PC-3 (cell line): ENCODE measurements at regions of chr17 and their contacts with region 1.

Region 1: DNA sequence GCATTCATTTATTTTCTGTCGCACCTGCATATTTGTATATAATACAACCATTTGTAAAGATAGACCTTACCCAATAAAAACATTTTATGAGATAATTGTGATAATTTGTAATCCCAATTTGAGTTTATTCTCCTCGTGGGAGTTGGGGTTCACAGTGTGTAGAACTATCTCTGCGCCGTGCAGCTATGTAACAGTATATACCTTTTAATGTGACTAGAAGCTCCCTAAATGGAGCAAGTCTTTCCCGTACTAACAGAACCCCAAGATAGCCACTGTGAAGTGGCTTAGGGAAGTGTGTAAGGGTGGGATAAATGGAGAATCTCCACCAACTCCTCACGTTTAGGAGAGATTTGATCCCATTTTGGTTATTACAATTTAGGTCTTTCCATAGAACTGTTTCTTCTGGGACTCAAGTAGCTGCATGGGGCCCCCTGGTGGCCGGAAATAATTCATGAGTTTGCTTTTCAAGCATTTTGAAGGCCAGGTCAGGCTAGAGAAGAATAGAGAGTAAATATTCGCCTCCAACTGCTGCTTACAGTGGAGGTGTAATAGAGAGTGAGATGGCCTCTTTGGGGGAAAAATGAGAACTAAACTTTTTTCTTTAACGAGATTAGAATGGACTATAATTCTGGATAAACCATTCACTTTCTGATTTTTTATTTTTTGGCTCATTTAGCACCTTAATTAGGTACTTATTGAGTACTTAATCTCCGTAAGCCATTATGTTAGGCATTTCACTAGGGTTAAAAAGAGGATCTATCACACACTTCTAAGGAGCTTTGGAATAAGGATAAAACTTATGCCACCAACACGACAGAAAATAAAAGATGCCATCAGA is 4.5 kb downstream of the TMEM100 start:
- DNase-seq: peak; percentile 90
- ATAC-seq: peak; percentile 81
- H3K4me3 ChIP-seq: no peak overlapping the region
- H3K27ac ChIP-seq: no peak overlapping the region
- H3K4me1 ChIP-seq: no peaks in the 10 kb centered on the region
- H3K27me3 ChIP-seq: peaks cover 51% of the 10 kb centered on the region
- CTCF ChIP-seq: peak; percentile 93

Region 2: GRCh38 chr17:55601874-55602364 is 116.2 kb before region 1 on chr17:
- CTCF ChIA-PET with region 1: no interaction called
- POLR2A ChIA-PET with region 1: no interaction called
- intact Hi-C with region 1: loop called (anchors 1 kb)
- DNase-seq: peak; percentile 77
- ATAC-seq: peak; percentile 76
- H3K4me3 ChIP-seq: no peak overlapping the region
- H3K27ac ChIP-seq: no peak overlapping the region
- H3K4me1 ChIP-seq: peaks cover 5% of the 10 kb centered on the region; the same call in 1 of the 2 replicates
- H3K27me3 ChIP-seq: peaks cover 19% of the 10 kb centered on the region
- CTCF ChIP-seq: peak; percentile 93

Region 3: DNA sequence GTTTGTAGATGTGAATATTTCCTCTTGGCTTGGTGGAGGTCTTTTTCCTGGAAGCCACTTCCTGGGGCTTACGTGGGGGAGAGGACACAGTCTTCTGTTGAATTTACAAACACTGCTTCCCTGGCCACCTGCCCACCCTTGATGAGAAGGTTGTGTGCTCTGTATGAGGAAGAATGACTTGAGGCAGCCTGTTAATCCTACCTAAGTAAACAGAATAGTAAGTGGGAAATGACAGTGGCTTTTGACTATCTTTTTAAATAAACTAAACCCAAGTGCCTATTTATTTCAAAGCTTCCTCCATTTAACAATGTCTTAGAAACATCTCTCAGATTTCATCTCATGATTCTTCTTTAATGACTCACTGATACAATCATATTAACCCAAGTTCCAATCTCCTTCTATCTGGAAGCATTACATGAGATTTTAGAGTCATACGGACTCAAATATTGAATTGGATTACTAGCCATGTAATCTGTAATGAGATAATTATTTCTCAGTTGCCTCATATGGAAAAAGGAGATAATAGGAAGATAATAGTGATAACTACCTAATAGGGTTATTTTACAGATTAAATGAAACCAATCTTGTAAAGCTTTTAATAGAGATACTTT is 110.3 kb before region 1 on chr17:
- CTCF ChIA-PET with region 1: no interaction called
- POLR2A ChIA-PET with region 1: no interaction called
- intact Hi-C with region 1: loop called (anchors 1 kb)
- DNase-seq: peak; percentile 97
- ATAC-seq: peak; percentile 96
- H3K4me3 ChIP-seq: no peak overlapping the region
- H3K27ac ChIP-seq: no peak overlapping the region
- H3K4me1 ChIP-seq: peaks cover 22% of the 10 kb centered on the region
- H3K27me3 ChIP-seq: peaks cover 17% of the 10 kb centered on the region
- CTCF ChIP-seq: no peak

Region 4: DNA sequence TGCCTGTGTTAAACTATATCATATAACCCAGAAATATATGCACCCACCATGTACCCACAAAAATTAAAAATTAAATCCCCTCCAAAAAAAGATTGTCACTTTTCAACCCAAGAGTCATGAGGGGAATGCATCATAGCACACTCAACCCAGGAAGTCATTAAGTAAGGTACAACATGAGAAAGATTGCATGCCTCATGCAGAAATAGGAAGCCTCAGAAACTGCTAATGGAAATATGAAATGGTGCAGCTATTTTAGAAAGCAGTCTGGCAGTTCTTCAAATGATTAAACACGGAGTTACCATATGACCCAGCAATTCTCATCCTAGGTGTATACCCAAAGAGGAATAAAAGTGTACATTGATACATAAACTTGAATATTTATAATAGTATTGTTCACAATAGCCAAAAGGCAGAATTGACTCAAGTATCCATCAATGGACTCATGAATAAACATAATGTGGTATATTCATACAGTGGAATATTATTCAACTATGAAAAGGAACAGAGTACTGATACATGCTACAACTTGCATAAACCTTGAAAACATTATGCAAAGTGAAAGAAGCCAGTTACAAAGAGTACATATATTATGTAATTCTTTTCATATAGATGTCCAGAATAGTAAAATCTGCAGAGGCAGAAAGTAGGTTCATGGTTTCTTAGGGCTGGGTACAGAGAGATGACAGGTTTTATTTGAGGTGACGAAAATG is 65.8 kb before region 1 on chr17:
- CTCF ChIA-PET with region 1: no interaction called
- POLR2A ChIA-PET with region 1: no interaction called
- intact Hi-C with region 1: loop called (anchors 5 kb)
- DNase-seq: no peak
- ATAC-seq: no peak
- H3K4me3 ChIP-seq: no peak overlapping the region
- H3K27ac ChIP-seq: no peak overlapping the region
- H3K4me1 ChIP-seq: no peaks in the 10 kb centered on the region
- H3K27me3 ChIP-seq: peaks cover 74% of the 10 kb centered on the region
- CTCF ChIP-seq: no peak

Region 5: DNA sequence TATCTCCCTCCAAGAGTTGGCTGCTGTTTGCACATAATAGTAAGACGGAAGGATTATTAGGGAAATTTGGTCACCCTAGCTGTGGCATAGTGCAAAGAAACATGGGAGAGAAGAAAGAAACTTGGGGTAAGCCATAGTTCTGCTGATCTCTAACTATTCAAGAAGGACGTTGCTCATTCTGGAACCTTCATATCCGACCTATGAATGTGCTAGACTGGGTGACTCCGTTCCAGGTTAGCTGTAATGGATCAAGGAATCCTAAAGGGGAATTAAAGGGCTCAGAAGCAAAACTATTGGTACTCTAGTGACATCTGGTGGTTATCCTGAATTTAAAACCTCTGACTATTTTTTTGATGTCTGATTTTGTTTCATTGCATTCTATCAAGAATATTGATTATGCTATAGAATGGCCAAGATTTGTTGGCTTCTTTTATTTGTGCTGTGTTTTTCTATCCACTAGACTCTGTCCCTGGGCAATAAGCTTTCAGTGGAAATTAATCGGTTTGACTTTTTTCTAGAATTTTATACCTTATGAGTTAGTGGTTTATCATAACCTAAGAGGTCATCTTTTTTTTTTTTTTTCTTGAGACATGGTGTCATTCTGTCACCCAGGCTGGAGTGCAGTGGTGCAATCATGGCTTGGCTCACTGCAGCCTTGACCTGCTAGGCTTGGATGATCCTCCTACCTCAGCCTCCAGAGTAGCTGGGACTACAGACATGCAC is 52.2 kb after region 1 on chr17:
- CTCF ChIA-PET with region 1: no interaction called
- POLR2A ChIA-PET with region 1: no interaction called
- intact Hi-C with region 1: loop called (anchors 1 kb)
- DNase-seq: peak; percentile 86
- ATAC-seq: peak; percentile 89
- H3K4me3 ChIP-seq: no peak overlapping the region
- H3K27ac ChIP-seq: no peak overlapping the region; the same call in 1 of the 2 replicates
- H3K4me1 ChIP-seq: peaks cover 15% of the 10 kb centered on the region
- H3K27me3 ChIP-seq: no peaks in the 10 kb centered on the region
- CTCF ChIP-seq: peak; percentile 84